ENCODE measurements at regions of chr13 and their contacts with region 1.

Region 1: GRCh38 chr13:33678906-33679657 is 138.9 kb upstream of the RFC3 start:
- DNase-seq: peak; percentile 77 to 86
- H3K4me3 ChIP-seq: no peak overlapping the region
- H3K4me3 Mint-ChIP-seq: peak overlapping the region; percentile 75
- H3K27ac Mint-ChIP-seq: peak overlapping the region; percentile 82
- H3K4me1 ChIP-seq: peaks cover 33% of the 10 kb centered on the region
- H3K4me1 Mint-ChIP-seq: peaks cover 36% of the 10 kb centered on the region
- H3K27me3 ChIP-seq: no peaks in the 10 kb centered on the region
- H3K27me3 Mint-ChIP-seq: no peaks in the 10 kb centered on the region
- CTCF ChIP-seq: no peak

Region 2: GRCh38 chr13:33606692-33607091 is 72.4 kb before region 1 on chr13:
- CTCF ChIA-PET with region 1: no interaction called
- POLR2A ChIA-PET with region 1: no interaction called
- intact Hi-C with region 1: loop called (anchors 2 kb)
- DNase-seq: peak; percentile 53 to 59
- H3K4me3 ChIP-seq: no peak overlapping the region
- H3K4me3 Mint-ChIP-seq: no peak overlapping the region
- H3K27ac Mint-ChIP-seq: no peak overlapping the region
- H3K4me1 ChIP-seq: peaks cover 9% of the 10 kb centered on the region; the same call in 1 of the 2 replicates
- H3K4me1 Mint-ChIP-seq: peaks cover 5% of the 10 kb centered on the region
- H3K27me3 ChIP-seq: no peaks in the 10 kb centered on the region
- H3K27me3 Mint-ChIP-seq: no peaks in the 10 kb centered on the region
- CTCF ChIP-seq: peak; percentile 27 to 62

Region 3: DNA sequence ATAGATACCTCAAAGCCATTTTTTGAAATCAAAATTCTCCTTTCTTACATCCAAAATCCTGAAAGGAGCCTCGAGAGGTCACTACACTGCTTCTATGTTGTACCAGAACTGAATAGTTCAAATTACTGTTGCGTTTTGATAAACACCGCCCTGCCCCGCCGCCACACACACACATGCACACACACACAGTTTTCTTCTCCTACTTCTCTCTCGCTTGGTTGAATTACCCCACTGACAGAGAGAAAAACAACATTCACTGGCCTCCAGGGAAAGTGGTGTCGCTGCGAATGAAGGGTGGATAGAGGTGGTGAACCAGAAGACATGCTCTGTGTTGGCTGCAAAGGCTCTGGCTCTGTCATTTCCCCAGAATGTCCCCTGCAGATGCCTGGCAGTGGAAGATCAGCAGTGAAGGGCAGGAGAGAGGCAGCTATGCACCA is 44.5 kb before region 1 on chr13:
- CTCF ChIA-PET with region 1: interaction called, 3 read pairs
- POLR2A ChIA-PET with region 1: no interaction called
- intact Hi-C with region 1: loop called (anchors 1 kb)
- DNase-seq: peak; percentile 62 to 64
- H3K4me3 ChIP-seq: no peak overlapping the region
- H3K4me3 Mint-ChIP-seq: peak overlapping the region; percentile 57
- H3K27ac Mint-ChIP-seq: peak overlapping the region; percentile 91
- H3K4me1 ChIP-seq: peaks cover 35% of the 10 kb centered on the region
- H3K4me1 Mint-ChIP-seq: peaks cover 27% of the 10 kb centered on the region
- H3K27me3 ChIP-seq: no peaks in the 10 kb centered on the region
- H3K27me3 Mint-ChIP-seq: no peaks in the 10 kb centered on the region
- CTCF ChIP-seq: no peak

Region 4: GRCh38 chr13:33642374-33643068 is 36.6 kb before region 1 on chr13:
- CTCF ChIA-PET with region 1: no interaction called
- POLR2A ChIA-PET with region 1: no interaction called
- intact Hi-C with region 1: loop called (anchors 1 kb)
- DNase-seq: peak; percentile 83 to 86
- H3K4me3 ChIP-seq: no peak overlapping the region
- H3K4me3 Mint-ChIP-seq: peak overlapping the region; percentile 22
- H3K27ac Mint-ChIP-seq: peak overlapping the region; percentile 89
- H3K4me1 ChIP-seq: peaks cover 54% of the 10 kb centered on the region
- H3K4me1 Mint-ChIP-seq: peaks cover 60% of the 10 kb centered on the region
- H3K27me3 ChIP-seq: no peaks in the 10 kb centered on the region
- H3K27me3 Mint-ChIP-seq: no peaks in the 10 kb centered on the region
- CTCF ChIP-seq: no peak

Region 5: DNA sequence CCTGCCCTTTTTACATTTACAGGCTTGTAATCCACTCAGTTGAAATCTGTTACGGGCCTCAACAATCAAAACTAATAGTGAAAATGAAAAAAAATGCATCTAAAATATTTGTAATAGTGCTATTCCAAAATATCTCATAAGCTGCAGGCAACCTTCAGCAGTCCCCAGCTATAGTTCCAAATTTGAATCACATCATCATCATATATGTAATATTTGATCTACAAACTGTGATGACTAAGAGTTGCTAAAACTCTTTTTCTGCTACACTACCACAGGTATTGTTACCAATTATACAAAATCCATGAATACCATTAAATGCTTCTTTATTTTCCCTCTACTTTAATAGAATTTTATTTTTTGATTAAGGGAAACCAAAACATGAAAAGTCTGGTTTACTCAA is 17.4 kb after region 1 on chr13:
- CTCF ChIA-PET with region 1: no interaction called
- POLR2A ChIA-PET with region 1: no interaction called
- intact Hi-C with region 1: loop called (anchors 2 kb)
- DNase-seq: no peak
- H3K4me3 ChIP-seq: no peak overlapping the region
- H3K4me3 Mint-ChIP-seq: no peak overlapping the region
- H3K27ac Mint-ChIP-seq: peak overlapping the region; percentile 37
- H3K4me1 ChIP-seq: peaks cover 21% of the 10 kb centered on the region
- H3K4me1 Mint-ChIP-seq: peaks cover 14% of the 10 kb centered on the region
- H3K27me3 ChIP-seq: no peaks in the 10 kb centered on the region
- H3K27me3 Mint-ChIP-seq: no peaks in the 10 kb centered on the region
- CTCF ChIP-seq: no peak

Region 6: GRCh38 chr13:33723772-33724435 is 44.8 kb after region 1 on chr13:
- CTCF ChIA-PET with region 1: interaction called, 3 read pairs
- POLR2A ChIA-PET with region 1: no interaction called
- intact Hi-C with region 1: loop called (anchors 2 kb)
- DNase-seq: peak; percentile 83 to 85
- H3K4me3 ChIP-seq: no peak overlapping the region
- H3K4me3 Mint-ChIP-seq: no peak overlapping the region
- H3K27ac Mint-ChIP-seq: peak overlapping the region; percentile 59
- H3K4me1 ChIP-seq: peaks cover 10% of the 10 kb centered on the region
- H3K4me1 Mint-ChIP-seq: peaks cover 8% of the 10 kb centered on the region
- H3K27me3 ChIP-seq: no peaks in the 10 kb centered on the region
- H3K27me3 Mint-ChIP-seq: no peaks in the 10 kb centered on the region
- CTCF ChIP-seq: peak; percentile 75 to 79